ENCODE measurements at regions of chr2 and their contacts with region 1.

Region 1: DNA sequence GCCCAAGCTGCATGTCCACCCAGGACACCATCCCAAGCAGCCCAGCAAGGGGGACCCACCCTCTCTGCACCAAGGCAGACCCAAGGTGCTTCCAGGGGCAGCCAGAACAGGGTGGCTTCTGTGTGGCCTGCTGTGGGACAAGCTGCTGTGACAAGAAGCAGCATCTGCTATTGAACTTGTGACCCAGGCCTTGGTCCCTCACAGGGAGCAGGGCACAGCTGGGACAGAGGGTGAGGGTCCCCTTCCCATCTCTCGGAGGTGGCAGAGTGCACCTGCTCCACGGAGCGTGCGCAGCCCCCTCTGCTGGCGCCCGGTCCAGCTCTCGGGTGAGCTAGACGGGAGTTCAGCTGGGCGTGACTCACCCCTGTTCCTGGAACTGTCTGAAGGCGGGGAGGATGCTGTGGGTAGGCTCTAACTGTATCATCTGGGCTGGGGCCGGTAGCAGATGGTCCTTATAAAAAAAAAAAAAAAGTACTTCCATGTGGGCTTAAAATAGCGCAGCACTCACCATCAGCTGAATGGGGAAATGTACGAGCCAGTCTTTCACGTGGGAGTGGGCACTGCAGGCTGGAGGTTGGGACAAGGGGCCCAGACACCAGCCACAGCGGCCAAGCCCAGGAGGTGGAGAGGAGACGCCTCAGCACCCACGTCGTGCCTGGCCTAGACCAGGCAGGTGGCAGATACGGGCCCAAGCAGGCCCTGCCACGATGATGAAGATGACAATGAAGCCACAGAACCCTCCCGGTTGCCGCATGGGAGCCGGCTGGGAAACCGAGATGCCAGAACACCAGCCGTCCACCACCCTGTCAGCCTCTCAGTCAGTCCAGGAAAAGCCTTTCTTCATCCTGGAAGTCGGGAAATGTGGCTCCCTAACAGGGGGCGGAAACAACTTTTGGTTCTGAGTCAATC is 136.8 kb upstream of the ID2 start:
- DNase-seq: peak; percentile 26 to 87 (median 74)
- H3K4me3 ChIP-seq: no peak overlapping the region
- H3K4me3 Mint-ChIP-seq: peak overlapping the region; percentile 37 to 92 (median 54)
- H3K27ac ChIP-seq: no peak overlapping the region
- H3K27ac Mint-ChIP-seq: peak overlapping the region; percentile 87 to 99 (median 96)
- H3K4me1 ChIP-seq: peaks cover 53% of the 10 kb centered on the region
- H3K4me1 Mint-ChIP-seq: peaks cover 68 to 73% (median 69%) of the 10 kb centered on the region in 3 donors
- H3K27me3 ChIP-seq: no peaks in the 10 kb centered on the region
- H3K27me3 Mint-ChIP-seq: no peaks in the 10 kb centered on the region

Region 2: DNA sequence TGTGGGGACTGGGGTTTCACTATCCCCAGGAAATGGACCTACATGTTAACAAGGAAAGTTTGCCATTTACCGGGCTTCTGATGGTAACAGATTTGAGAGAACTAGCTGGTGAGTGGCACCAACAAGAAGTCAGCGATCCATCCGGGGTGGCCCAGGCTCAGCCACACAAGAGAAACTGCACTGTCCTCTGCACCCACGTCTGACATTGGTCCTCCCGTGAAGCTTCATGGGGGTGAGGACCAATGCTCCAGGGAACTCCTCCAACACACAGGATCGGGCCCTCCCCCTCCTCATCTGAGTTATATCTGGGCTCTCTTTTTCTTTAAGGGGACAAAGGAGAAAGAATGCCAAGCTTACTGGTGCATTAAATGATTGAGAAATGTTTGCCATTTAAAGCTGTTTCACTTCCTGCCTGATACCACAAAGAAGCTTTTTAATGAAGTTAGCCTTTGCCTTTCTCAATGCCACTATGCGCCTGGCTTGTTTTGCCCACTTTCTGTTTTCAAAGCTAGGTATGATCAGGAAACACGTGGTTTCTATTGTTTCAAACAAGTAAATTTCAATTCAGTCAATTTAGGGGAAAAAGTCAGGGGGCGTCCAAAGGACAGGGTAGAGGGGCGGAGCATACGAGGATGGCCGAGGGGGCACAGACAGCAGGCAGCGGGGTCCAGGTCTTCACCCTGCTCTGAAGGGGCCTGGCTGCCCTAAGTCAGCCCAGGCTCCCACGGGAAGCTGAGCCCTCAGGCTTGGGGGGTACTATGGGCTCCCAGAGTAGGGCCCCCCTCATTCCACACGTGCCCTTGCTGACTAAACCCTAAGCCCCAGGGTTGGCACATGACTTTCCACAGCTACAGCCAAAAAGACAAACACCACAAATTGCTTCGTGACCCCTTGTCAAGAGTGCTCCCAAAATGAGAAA is 67.2 kb before region 1 on chr2:
- CTCF ChIA-PET with region 1: interaction called, 11 read pairs
- POLR2A ChIA-PET with region 1: interaction called, 7 read pairs
- DNase-seq: peak in 2 of 5 donors; percentile 54 to 58
- H3K4me3 ChIP-seq: peak overlapping the region; percentile 10
- H3K4me3 Mint-ChIP-seq: peak overlapping the region; percentile 47 to 85 (median 84)
- H3K27ac ChIP-seq: peak overlapping the region; percentile 27
- H3K27ac Mint-ChIP-seq: peak overlapping the region; percentile 86 to 99 (median 96)
- H3K4me1 ChIP-seq: peaks cover 54% of the 10 kb centered on the region
- H3K4me1 Mint-ChIP-seq: peaks cover 89 to 100% (median 98%) of the 10 kb centered on the region in 3 donors
- H3K27me3 ChIP-seq: no peaks in the 10 kb centered on the region
- H3K27me3 Mint-ChIP-seq: no peaks in the 10 kb centered on the region

Region 3: GRCh38 chr2:8533923-8534322 is 11.1 kb before region 1 on chr2:
- CTCF ChIA-PET with region 1: interaction called, 13 read pairs
- POLR2A ChIA-PET with region 1: no interaction called
- DNase-seq: no peak
- H3K4me3 ChIP-seq: no peak overlapping the region
- H3K4me3 Mint-ChIP-seq: no peak overlapping the region
- H3K27ac ChIP-seq: no peak overlapping the region
- H3K27ac Mint-ChIP-seq: no peak overlapping the region
- H3K4me1 ChIP-seq: peaks cover 13% of the 10 kb centered on the region
- H3K4me1 Mint-ChIP-seq: peaks cover 15 to 17% (median 16%) of the 10 kb centered on the region in 3 donors
- H3K27me3 ChIP-seq: no peaks in the 10 kb centered on the region
- H3K27me3 Mint-ChIP-seq: peaks cover 0 to under 1% of the 10 kb centered on the region in 2 donors

Region 4: GRCh38 chr2:8581234-8581561 is 36.2 kb after region 1 on chr2:
- CTCF ChIA-PET with region 1: no interaction called
- POLR2A ChIA-PET with region 1: no interaction called
- DNase-seq: no peak
- H3K4me3 ChIP-seq: no peak overlapping the region
- H3K4me3 Mint-ChIP-seq: no peak overlapping the region
- H3K27ac ChIP-seq: no peak overlapping the region
- H3K27ac Mint-ChIP-seq: peak overlapping the region in 2 of 8 donors; percentile 52 to 61
- H3K4me1 ChIP-seq: peaks cover 20% of the 10 kb centered on the region
- H3K4me1 Mint-ChIP-seq: peaks cover 27 to 35% (median 34%) of the 10 kb centered on the region in 3 donors
- H3K27me3 ChIP-seq: no peaks in the 10 kb centered on the region
- H3K27me3 Mint-ChIP-seq: peaks cover 0 to 2% of the 10 kb centered on the region in 2 donors